Dendritic cell treated with granulocyte-macrophage colony-stimulating factor and Interleukin-4, amounts not matched to agents 40 ng/mL and 50 ng/mL, for 4 days (primary cell): ENCODE measurements at regions of chr1 and their contacts with region 1.

Region 1: GRCh38 chr1:236795035-236795756 is at the start of gene MTR:
- H3K4me3 Mint-ChIP-seq: peak within 1 kb of the TSS; percentile 97
- H3K27ac Mint-ChIP-seq: peak within 1 kb of the TSS; percentile 96
- H3K4me1 Mint-ChIP-seq: peaks cover 23% of the 10 kb centered on the region
- H3K27me3 Mint-ChIP-seq: peaks cover 14% of the 10 kb centered on the region

Region 2: DNA sequence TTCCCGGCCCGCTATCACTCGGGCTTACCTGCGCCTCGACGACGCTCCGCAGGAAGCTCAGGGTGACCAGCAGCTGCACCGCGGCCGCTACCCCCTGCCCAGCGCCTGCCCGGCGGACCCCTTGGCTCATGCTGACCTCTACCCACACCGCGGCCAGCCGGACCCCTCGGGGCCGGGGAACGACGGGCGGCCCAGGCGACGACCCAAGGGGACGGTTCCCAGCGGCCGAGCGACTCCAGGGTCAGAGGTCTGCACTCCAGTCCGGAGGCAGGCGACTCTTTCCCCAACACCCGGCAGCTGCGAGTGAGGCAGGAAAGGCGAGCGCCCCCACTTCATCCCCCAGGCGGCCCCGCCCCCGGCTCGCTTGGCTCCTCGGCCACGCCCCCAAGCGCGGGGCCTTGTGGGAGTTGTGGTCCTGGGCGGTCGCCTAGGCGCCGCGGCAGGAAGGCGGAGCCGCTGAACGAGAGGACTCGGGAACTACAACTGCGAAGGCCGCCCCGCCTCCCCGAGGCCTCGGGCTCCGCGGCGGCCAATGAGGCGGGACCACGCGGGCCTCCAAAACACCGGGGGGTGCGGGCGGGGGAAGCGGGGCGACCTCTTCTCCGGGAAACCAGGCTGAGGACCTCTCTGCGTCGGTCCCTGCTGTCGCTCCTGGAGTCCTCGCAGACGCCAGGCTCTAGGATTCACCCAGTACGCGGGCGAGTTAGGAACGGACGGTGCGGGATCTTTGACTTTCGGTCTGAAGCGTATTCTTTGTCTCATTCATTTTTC is 513.4 kb before region 1 on chr1 and contains the start of gene ERO1B:
- intact Hi-C with region 1: loop called (anchors 5 kb)
- H3K4me3 Mint-ChIP-seq: peak within 1 kb of the TSS; percentile 86
- H3K27ac Mint-ChIP-seq: peak within 1 kb of the TSS; percentile 89
- H3K4me1 Mint-ChIP-seq: peaks cover 41% of the 10 kb centered on the region
- H3K27me3 Mint-ChIP-seq: peaks cover 6% of the 10 kb centered on the region

Region 3: GRCh38 chr1:236603991-236604904 is 190.9 kb before region 1 on chr1 and contains the start of gene HEATR1:
- intact Hi-C with region 1: loop called (anchors 2 kb)
- H3K4me3 Mint-ChIP-seq: peak within 1 kb of the TSS; percentile 85
- H3K27ac Mint-ChIP-seq: peak within 1 kb of the TSS; percentile 86
- H3K4me1 Mint-ChIP-seq: peaks cover 12% of the 10 kb centered on the region
- H3K27me3 Mint-ChIP-seq: peaks cover 8% of the 10 kb centered on the region

Region 4: GRCh38 chr1:236759252-236759859 is 35.8 kb before region 1 on chr1:
- intact Hi-C with region 1: loop called (anchors 5 kb)
- H3K4me3 Mint-ChIP-seq: no peak overlapping the region
- H3K27ac Mint-ChIP-seq: no peak overlapping the region
- H3K4me1 Mint-ChIP-seq: peaks cover 5% of the 10 kb centered on the region
- H3K27me3 Mint-ChIP-seq: no peaks in the 10 kb centered on the region

Region 5: GRCh38 chr1:236868625-236869467 is 73.7 kb after region 1 on chr1:
- intact Hi-C with region 1: loop called (anchors 1 kb)
- H3K4me3 Mint-ChIP-seq: no peak overlapping the region
- H3K27ac Mint-ChIP-seq: peak overlapping the region; percentile 92
- H3K4me1 Mint-ChIP-seq: peaks cover 40% of the 10 kb centered on the region
- H3K27me3 Mint-ChIP-seq: no peaks in the 10 kb centered on the region